ENCODE measurements at regions of chr10 and their contacts with region 1.

Region 1: DNA sequence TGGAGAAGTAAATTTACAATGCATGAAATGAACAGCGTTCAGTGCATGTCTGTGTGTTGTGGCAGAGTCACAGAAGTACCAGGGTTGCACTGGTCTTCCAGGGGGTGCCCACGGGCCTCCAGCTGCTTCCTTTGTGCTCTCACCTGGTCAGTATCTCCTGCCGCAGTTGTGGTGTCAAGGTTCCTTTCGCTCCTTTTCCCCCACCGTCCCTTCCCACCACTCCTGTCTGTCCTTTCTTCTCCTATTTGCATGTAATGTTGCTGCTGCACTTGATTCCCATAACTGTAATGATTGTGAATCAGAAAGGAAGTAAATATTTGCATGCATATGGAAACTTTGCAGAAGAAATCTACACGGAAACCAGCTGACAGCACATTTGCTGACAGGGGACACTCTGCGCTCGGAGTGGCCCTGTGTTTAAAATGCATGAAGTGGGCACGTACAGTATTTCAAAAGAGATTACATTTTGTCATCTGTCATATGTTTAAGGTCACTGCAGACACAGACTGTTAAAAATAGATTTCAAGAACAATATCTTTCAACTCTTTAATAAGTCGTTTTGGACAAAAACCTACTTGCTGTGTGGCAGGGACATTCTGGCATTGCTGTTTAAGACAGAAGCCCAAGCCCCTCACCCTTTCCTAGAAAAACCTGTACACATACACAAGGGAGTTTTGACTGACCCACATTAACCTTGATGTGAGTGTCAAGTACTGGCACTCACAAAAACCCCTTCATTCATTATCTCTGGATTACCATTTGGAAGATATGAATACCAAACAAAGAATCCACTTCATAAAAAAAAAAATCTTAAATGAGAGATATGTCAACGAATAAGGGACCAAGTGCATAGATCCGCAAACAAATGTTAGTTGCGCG is 336.7 kb upstream of the KLF6 start:
- DNase-seq: peak; percentile 54
- ATAC-seq: peak; percentile 69
- H3K4me3 ChIP-seq: peak overlapping the region; percentile 3 to 51 (median 30)
- H3K4me3 Mint-ChIP-seq: peak overlapping the region; percentile 82
- H3K27ac ChIP-seq: no peak overlapping the region
- H3K27ac Mint-ChIP-seq: peak overlapping the region; percentile 62
- H3K4me1 ChIP-seq: peaks cover 14 to 32% of the 10 kb centered on the region in 2 donors
- H3K4me1 Mint-ChIP-seq: peaks cover 37% of the 10 kb centered on the region
- H3K27me3 ChIP-seq: no peaks in the 10 kb centered on the region
- H3K27me3 Mint-ChIP-seq: no peaks in the 10 kb centered on the region
- CTCF ChIP-seq: no peak

Region 2: GRCh38 chr10:4061441-4061951 is 60.2 kb before region 1 on chr10:
- CTCF ChIA-PET with region 1: no interaction called
- POLR2A ChIA-PET with region 1: no interaction called
- intact Hi-C with region 1: loop called (anchors 5 kb)
- DNase-seq: no peak
- ATAC-seq: no peak
- H3K4me3 ChIP-seq: no peak overlapping the region
- H3K4me3 Mint-ChIP-seq: no peak overlapping the region
- H3K27ac ChIP-seq: no peak overlapping the region
- H3K27ac Mint-ChIP-seq: no peak overlapping the region
- H3K4me1 ChIP-seq: peaks cover 7 to 12% of the 10 kb centered on the region in 2 donors
- H3K4me1 Mint-ChIP-seq: peaks cover 15% of the 10 kb centered on the region
- H3K27me3 ChIP-seq: no peaks in the 10 kb centered on the region
- H3K27me3 Mint-ChIP-seq: no peaks in the 10 kb centered on the region
- CTCF ChIP-seq: no peak

Region 3: GRCh38 chr10:5800790-5801189 is 1679.0 kb after region 1 on chr10:
- CTCF ChIA-PET with region 1: no interaction called
- POLR2A ChIA-PET with region 1: no interaction called
- intact Hi-C with region 1: no loop called
- DNase-seq: no peak
- ATAC-seq: no peak
- H3K4me3 ChIP-seq: no peak overlapping the region
- H3K4me3 Mint-ChIP-seq: no peak overlapping the region
- H3K27ac ChIP-seq: no peak overlapping the region
- H3K27ac Mint-ChIP-seq: peak overlapping the region; percentile 13
- H3K4me1 ChIP-seq: peaks cover 16 to 20% of the 10 kb centered on the region in 2 donors
- H3K4me1 Mint-ChIP-seq: peaks cover 33% of the 10 kb centered on the region
- H3K27me3 ChIP-seq: no peaks in the 10 kb centered on the region
- H3K27me3 Mint-ChIP-seq: no peaks in the 10 kb centered on the region
- CTCF ChIP-seq: no peak